Activated B cell treated with CpG ODN at 0.5 μM for 24 hours (primary cell): ENCODE measurements at regions of chr20 and their contacts with region 1.

Region 1: GRCh38 chr20:46307139-46307998 is 929 bp downstream of the CDH22 start:
- DNase-seq: peak; percentile 61
- ATAC-seq: peak; percentile 87
- H3K4me3 Mint-ChIP-seq: peak overlapping the region; percentile 16
- H3K27ac Mint-ChIP-seq: no peak overlapping the region
- H3K4me1 Mint-ChIP-seq: peaks cover 11% of the 10 kb centered on the region
- H3K27me3 Mint-ChIP-seq: peaks cover 67% of the 10 kb centered on the region
- CTCF ChIP-seq: no peak

Region 2: DNA sequence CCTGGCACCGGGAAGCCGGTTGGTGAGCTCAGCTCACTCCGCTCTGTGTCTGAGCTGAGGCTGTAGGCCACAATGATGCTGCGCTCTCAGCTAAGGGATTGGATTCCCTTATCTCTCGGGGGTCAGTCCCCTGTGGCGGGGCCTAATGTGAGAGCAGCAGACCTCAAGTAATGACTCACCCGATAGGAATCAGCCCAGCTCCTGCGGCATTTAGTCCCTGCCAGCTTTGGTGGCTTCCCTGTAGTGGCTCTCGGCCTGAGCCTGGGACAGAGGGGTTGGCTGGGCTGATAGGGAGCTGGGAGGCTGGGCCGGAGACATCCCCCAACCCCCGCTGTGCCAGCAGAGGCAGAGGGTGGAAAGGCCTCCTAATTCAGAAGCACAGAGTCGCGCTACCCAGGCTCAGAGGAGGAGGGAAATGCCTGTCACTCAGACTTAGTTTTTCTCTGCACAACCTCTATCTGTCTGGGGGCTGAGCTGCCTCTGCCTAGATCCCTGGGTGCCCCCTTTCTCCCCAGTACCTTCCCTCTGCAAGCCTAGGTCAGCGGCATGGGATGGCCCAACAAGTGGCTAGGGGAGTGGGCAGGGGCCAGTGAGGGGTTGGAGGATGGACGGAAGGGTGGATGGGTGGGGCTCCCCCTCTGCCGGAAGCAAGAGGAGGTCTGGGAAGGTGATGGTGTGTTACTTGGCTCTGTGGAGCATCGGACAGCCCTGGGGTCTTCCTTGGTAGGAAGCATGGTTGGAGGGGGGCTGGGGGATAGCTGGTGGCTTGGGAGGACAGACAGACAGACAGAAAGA is 91.3 kb before region 1 on chr20:
- CTCF ChIA-PET with region 1: no interaction called
- POLR2A ChIA-PET with region 1: no interaction called
- intact Hi-C with region 1: no loop called
- DNase-seq: no peak
- ATAC-seq: no peak
- H3K4me3 Mint-ChIP-seq: no peak overlapping the region
- H3K27ac Mint-ChIP-seq: no peak overlapping the region
- H3K4me1 Mint-ChIP-seq: no peaks in the 10 kb centered on the region
- H3K27me3 Mint-ChIP-seq: peaks cover 20% of the 10 kb centered on the region
- CTCF ChIP-seq: no peak

Region 3: DNA sequence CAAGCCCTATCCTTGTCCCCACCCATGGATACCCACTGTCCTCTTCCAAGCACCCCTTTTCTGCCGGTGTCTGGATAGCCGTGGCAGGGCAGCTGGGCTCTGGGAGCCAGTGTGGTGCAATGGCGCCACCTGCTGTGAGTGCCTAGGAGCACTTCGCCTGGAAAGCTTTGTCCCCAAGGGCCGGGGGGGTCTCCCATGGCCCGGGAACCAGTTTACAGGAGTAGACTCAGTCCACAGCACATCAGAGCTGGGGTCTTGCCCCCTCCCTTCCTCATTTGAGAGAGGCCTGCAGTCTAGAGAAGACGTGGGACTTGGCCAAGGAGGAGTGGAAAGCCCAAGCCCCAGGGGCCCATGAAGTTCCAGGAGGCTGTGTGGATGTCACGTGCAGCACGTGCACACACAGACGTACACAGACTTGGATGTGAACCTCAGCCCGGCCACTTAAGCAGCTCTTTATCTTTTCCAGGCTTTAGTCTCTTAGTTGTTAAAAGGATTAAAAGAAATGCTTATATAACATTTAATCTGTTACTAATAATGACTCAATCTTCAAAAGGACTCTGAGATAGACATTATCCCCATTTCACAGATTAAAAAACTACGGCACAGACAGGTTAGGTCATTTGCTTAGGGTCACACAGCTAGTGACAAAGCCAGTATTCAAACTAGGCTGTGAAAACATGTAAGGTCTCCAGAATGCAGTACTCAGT is 41.8 kb after region 1 on chr20:
- CTCF ChIA-PET with region 1: interaction called, 16 read pairs
- POLR2A ChIA-PET with region 1: interaction called, 3 read pairs
- intact Hi-C with region 1: loop called (anchors 1 kb)
- DNase-seq: peak; percentile 40
- ATAC-seq: no peak
- H3K4me3 Mint-ChIP-seq: no peak overlapping the region
- H3K27ac Mint-ChIP-seq: no peak overlapping the region
- H3K4me1 Mint-ChIP-seq: peaks cover 28% of the 10 kb centered on the region
- H3K27me3 Mint-ChIP-seq: no peaks in the 10 kb centered on the region
- CTCF ChIP-seq: no peak

Region 4: GRCh38 chr20:46411637-46412036 is 104.3 kb after region 1 on chr20:
- CTCF ChIA-PET with region 1: interaction called, 12 read pairs
- POLR2A ChIA-PET with region 1: interaction called, 6 read pairs
- intact Hi-C with region 1: loop called (anchors 1 kb)
- DNase-seq: no peak
- ATAC-seq: no peak
- H3K4me3 Mint-ChIP-seq: no peak overlapping the region
- H3K27ac Mint-ChIP-seq: no peak overlapping the region
- H3K4me1 Mint-ChIP-seq: peaks cover 13% of the 10 kb centered on the region
- H3K27me3 Mint-ChIP-seq: peaks cover 16% of the 10 kb centered on the region
- CTCF ChIP-seq: no peak